Activated CD8-positive, alpha-beta T cell treated with anti-CD3 and anti-CD28 coated beads, Interleukin-2, amount 10 ng/mL, durations not matched to agents 7 days and 5 days (primary cell): ENCODE measurements at regions of chr19 and their contacts with region 1.

Region 1: GRCh38 chr19:13774217-13775191 is at the start of gene C19orf53:
- DNase-seq: peak; percentile 95
- ATAC-seq: peak; percentile 98
- H3K4me3 Mint-ChIP-seq: peak within 1 kb of the TSS; percentile 97
- H3K27ac Mint-ChIP-seq: peak within 1 kb of the TSS; percentile 95
- H3K4me1 Mint-ChIP-seq: peaks cover 26% of the 10 kb centered on the region
- H3K27me3 Mint-ChIP-seq: no peaks in the 10 kb centered on the region
- total RNA-seq, gene C19orf53: 112 to 114 TPM

Region 2: DNA sequence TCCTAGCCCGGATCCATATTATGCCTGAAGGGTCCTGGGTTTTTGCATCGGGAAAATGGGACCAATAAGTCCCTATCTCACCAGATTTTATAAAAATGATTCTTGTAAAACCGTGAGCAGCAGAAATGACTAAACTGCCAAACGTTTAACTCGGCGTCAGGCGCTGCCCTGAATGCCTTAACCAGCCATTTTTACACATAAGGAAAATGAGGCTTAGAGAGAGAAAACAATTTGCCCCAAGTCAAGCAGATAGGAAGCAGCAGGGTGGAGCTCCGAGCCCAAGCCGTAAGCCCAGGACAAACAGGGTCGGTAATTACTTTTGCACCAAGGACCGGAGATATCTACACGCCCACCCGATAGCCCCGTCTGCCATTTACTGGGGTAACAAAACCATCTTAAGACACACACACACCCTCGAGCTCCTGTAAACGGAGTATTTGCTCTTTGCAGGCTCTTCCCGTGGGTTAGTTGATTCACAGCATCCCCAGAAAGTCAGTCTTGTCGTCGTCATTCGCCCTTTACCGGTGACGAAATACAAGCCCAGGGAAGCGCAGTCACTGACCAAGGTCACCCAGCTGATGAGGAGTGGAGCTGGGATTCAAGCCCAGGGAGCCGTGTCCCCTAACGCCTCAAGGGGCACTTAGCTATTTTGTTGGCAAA is 26.2 kb before region 1 on chr19:
- CTCF ChIA-PET with region 1: interaction called, 7 read pairs
- POLR2A ChIA-PET with region 1: interaction called, 12 read pairs
- DNase-seq: peak; percentile 30
- ATAC-seq: peak; percentile 3
- H3K4me3 Mint-ChIP-seq: peak overlapping the region; percentile 94
- H3K27ac Mint-ChIP-seq: peak overlapping the region; percentile 96
- H3K4me1 Mint-ChIP-seq: peaks cover 33% of the 10 kb centered on the region
- H3K27me3 Mint-ChIP-seq: no peaks in the 10 kb centered on the region

Region 3: GRCh38 chr19:13764101-13764807 is 10.2 kb before region 1 on chr19 and contains the start of gene MRI1:
- CTCF ChIA-PET with region 1: no interaction called
- POLR2A ChIA-PET with region 1: interaction called, 21 read pairs
- DNase-seq: peak; percentile 75
- ATAC-seq: peak; percentile 90
- H3K4me3 Mint-ChIP-seq: peak within 1 kb of the TSS; percentile 79
- H3K27ac Mint-ChIP-seq: peak within 1 kb of the TSS; percentile 85
- H3K4me1 Mint-ChIP-seq: peaks cover 26% of the 10 kb centered on the region
- H3K27me3 Mint-ChIP-seq: no peaks in the 10 kb centered on the region
- total RNA-seq, gene MRI1: 47.8 to 50.6 TPM

Region 4: DNA sequence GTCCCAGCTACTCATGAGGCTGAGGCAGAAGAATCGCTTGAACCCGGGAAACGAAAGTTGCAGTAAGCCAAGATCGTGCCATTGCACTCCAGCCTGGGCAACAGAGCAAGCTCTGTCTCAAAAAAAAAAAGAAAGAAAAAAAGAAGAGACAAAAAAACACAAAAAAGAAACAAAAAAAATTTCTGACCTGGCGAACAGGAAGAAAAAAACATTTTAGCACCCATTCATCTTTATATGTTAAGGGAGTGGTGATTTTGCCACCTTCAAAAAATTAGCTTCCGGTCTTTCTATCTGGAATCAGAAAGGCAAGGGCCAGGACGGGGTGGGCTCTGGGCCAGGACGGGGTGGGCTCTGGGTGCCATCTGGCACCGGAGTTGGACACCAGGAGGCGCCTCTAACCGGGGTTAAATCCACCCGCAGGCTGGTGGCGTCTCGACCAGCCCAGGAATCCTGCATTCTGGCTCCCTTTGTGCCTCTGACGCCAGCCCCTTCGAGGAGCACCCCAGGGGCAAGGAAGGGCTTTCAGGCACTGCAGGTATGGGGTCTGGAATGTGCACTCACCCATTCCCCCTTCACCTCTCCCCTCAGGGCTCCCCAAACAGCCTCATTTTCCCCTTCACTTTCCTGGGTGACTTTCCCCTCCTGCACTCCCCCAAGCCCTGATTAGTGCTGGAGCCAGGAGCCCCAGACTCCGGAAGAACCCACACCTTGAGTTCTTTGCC is 10.4 kb after region 1 on chr19:
- CTCF ChIA-PET with region 1: interaction called, 12 read pairs
- POLR2A ChIA-PET with region 1: interaction called, 5 read pairs
- DNase-seq: peak; percentile 81
- ATAC-seq: peak; percentile 64
- H3K4me3 Mint-ChIP-seq: peak overlapping the region; percentile 31
- H3K27ac Mint-ChIP-seq: peak overlapping the region; percentile 72
- H3K4me1 Mint-ChIP-seq: peaks cover 43% of the 10 kb centered on the region
- H3K27me3 Mint-ChIP-seq: no peaks in the 10 kb centered on the region

Region 5: DNA sequence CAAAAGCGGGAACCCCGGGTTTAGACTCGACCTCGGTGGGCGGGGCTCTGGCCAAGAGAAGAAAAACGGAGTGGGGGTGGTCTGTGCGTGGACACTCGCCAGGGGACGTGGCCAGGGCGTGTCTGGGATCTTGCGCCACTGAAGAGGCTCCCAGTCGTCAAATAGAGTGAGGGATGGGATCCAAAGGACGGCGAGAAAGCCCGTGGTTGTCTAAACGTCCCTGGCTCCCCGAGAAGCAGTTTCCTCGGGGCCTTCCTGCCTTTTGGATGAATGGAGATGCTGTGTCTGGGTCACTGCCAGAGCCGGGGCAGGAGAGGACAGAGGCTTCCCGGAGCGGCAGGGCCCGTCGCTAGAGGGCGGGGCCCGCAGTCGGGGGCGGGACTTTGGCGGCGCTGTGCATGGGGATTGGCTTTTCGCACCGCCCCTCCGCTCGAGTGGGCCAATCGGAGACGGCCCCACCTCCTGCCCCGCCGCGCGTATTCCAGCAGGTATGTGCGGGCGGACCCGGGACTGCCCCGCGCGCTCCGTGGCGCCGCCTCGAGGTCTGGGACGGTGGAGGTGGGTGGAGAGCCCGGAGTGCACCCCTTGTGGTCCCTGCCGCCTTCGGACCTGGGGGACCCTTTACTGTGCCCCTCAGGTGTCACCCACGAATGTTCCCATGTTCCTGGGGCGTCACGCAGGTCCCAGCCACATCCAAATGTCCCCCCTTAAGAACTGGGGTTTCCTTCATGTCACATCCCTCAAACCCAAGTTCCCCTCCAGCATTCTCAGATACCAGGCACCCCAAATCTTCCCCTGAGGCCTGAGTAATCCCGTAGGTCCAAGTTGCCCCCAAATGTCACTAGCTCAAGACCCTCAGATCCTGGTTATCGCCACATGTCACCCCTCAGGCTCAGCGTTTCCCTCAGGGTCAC is 59.1 kb after region 1 on chr19:
- CTCF ChIA-PET with region 1: interaction called, 3 read pairs
- POLR2A ChIA-PET with region 1: interaction called, 14 read pairs
- DNase-seq: peak; percentile 93
- ATAC-seq: peak; percentile 64
- H3K4me3 Mint-ChIP-seq: peak overlapping the region; percentile 68
- H3K27ac Mint-ChIP-seq: peak overlapping the region; percentile 81
- H3K4me1 Mint-ChIP-seq: peaks cover 51% of the 10 kb centered on the region
- H3K27me3 Mint-ChIP-seq: no peaks in the 10 kb centered on the region

Region 6: DNA sequence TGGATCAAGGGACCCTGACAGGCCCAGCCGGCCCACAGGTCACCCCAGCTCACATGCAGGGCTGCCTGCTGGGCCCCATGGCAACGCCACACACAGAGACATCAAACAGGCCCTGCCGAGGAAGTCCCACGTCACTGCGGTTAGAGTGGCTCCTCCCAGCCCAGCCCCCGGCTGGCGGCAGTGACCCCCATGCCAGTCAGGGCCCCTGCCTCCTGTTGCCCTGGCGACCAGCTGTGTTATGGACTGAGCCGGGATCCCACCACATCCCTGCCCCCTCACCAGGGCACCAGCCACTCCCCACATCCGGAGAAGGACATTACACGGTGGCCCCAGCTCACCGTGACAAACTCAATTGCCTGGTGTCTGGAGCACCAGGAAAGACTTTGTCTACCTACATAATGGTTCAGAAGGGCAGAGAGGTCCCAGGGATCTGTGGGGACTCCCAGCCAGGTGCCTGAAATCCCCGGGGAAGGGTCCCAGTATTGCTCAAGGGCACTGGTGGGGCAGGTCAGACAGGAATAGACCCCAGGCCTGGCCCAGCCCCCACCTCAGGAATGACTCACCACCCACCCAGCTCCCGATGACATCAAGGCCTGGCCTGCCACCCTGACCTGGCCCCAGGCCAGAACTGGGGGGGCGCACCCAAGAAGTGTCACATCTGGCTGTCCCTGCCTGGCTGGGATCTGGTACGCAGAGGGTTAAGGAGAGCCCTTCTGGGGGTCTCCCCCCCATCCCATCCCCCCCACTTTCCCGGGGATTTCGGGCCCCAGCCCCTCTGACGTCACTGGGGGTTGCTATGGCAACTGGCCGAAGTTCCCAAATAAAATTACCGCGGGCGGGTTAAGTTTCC is 72.3 kb after region 1 on chr19:
- CTCF ChIA-PET with region 1: interaction called, 3 read pairs
- POLR2A ChIA-PET with region 1: interaction called, 11 read pairs
- DNase-seq: peak; percentile 97
- ATAC-seq: peak; percentile 61
- H3K4me3 Mint-ChIP-seq: peak overlapping the region; percentile 79
- H3K27ac Mint-ChIP-seq: peak overlapping the region; percentile 99
- H3K4me1 Mint-ChIP-seq: peaks cover 61% of the 10 kb centered on the region
- H3K27me3 Mint-ChIP-seq: no peaks in the 10 kb centered on the region